BJ (cell line): ENCODE measurements at regions of chr22 and their contacts with region 1.

Region 1: DNA sequence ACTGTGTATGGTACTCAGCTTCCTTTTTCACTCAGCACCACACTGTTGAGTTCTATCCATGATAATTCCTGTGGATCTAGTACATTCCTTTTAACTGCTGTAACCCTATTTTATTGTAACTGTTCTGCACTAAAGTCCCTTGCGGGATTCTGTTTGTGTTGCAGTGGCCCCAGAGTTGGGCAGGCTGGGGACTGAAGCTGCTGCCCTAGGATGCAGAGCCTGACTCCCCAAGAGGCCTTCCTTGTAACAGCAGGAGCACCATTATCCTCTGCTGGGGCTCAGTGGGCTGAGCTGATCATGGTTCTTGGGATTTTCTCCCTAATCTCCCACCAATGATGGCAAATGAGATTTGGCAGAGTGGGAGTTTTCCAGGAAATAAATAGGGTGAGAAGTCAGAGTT is 77.7 kb downstream of the CABIN1 start:
- DNase-seq: peak; percentile 37
- H3K4me3 ChIP-seq: no peak overlapping the region
- H3K27me3 ChIP-seq: no peaks in the 10 kb centered on the region
- CTCF ChIP-seq: no peak

Region 2: DNA sequence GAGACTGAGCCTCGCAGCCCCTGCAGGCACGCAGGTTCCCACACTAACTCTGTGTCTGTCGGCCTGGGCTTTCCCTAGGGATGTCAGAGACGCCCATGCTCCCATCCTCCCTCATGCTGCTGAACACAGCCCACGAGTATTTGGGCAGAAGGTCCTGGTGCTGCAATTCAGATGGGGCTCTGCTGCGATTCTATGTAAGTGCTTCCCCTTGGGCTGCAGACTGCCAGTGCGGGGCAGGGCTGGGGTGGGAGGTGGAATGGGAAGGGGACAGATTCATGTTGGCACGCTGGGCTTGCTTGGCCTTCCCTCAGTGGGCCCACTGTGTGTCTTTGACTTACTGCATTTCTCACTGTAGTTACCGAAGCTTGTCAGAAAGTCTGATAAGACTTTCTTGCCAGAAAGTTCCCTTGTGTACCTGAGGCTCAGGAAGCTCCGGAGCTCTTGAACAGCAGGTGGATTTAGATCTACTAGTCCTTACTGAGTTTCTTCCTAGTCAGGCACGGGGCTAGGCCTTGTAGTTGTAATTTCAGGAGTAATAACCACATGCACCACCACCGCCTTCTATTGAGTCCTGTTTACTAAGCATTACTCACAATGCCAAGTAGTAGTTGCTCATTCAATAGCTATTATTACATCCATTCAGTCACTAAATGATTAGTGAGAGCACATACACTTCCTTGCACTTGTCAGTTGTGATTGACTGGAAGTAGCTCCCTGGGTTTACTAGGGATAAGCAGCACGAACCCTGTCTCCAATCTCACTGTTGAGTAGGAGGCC is 12.5 kb before region 1 on chr22:
- CTCF ChIA-PET with region 1: interaction called, 18 read pairs
- POLR2A ChIA-PET with region 1: no interaction called
- DNase-seq: no peak
- H3K4me3 ChIP-seq: no peak overlapping the region
- H3K27me3 ChIP-seq: no peaks in the 10 kb centered on the region
- CTCF ChIP-seq: no peak

Region 3: DNA sequence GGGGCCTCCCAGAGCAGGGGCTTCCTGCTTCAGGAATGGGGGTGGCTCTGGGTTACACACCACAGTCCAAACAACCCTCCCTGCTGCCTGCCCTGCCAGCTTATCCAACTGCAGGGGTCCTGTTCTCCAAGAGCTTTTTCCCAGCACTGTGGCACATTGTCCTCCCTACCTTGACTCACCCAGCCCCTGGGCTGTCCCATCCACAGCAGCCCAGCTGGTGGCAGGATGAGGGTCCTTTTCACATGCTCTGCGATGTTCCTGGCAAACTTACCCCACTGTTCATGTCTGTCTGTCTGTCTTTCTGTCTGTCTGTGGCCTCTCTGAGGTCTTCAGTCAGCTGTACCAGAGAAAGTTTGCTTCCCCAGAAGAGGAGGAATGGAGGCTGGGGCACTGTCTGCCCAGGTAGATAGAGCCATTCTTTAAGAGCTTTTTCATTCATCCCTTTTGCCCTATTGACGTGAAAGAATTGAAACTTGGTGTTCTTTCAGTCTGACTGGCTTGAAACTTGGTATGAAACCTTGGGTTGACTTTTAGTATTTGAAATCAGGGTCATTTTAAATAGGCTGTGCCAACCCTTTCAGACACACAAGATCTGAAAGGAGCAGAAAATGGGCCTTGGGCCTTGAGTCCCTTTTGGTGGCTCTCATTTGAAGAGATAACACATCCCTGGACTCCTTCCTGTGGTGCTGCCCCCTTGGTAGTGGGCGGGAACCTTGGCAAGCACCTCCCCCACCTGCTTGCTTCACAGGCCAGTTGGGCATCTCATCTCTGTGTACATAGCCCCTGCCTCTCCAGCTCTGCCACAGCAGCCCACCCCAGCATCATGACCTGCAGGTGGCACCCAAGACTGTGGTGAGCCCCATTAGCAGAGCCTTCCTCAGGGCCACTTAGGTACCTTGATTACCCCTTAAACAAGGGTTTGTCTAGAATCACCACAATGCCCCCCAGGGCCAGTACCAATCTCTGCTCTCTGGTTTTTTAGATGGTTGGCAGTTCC is 17.9 kb after region 1 on chr22:
- CTCF ChIA-PET with region 1: interaction called, 17 read pairs
- POLR2A ChIA-PET with region 1: no interaction called
- DNase-seq: no peak
- H3K4me3 ChIP-seq: no peak overlapping the region
- H3K27me3 ChIP-seq: no peaks in the 10 kb centered on the region
- CTCF ChIP-seq: peak; percentile 27; the same call in 1 of the 2 replicates

Region 4: GRCh38 chr22:24208012-24208749 is 119.4 kb after region 1 on chr22:
- CTCF ChIA-PET with region 1: no interaction called
- POLR2A ChIA-PET with region 1: no interaction called
- DNase-seq: peak; percentile 95
- H3K4me3 ChIP-seq: no peak overlapping the region
- H3K27me3 ChIP-seq: no peaks in the 10 kb centered on the region
- CTCF ChIP-seq: no peak